ENCODE measurements at regions of chr3 and their contacts with region 1.

Region 1: GRCh38 chr3:36937492-36937891 is 7.4 kb downstream of the TRANK1 start:
- DNase-seq: no peak
- ATAC-seq: no peak
- H3K4me3 ChIP-seq: no peak overlapping the region
- H3K4me3 Mint-ChIP-seq: no peak overlapping the region
- H3K27ac ChIP-seq: no peak overlapping the region
- H3K27ac Mint-ChIP-seq: no peak overlapping the region
- H3K4me1 ChIP-seq: no peaks in the 10 kb centered on the region
- H3K4me1 Mint-ChIP-seq: peaks cover 13 to 16% (median 16%) of the 10 kb centered on the region in 3 donors
- H3K27me3 ChIP-seq: no peaks in the 10 kb centered on the region
- H3K27me3 Mint-ChIP-seq: no peaks in the 10 kb centered on the region

Region 2: DNA sequence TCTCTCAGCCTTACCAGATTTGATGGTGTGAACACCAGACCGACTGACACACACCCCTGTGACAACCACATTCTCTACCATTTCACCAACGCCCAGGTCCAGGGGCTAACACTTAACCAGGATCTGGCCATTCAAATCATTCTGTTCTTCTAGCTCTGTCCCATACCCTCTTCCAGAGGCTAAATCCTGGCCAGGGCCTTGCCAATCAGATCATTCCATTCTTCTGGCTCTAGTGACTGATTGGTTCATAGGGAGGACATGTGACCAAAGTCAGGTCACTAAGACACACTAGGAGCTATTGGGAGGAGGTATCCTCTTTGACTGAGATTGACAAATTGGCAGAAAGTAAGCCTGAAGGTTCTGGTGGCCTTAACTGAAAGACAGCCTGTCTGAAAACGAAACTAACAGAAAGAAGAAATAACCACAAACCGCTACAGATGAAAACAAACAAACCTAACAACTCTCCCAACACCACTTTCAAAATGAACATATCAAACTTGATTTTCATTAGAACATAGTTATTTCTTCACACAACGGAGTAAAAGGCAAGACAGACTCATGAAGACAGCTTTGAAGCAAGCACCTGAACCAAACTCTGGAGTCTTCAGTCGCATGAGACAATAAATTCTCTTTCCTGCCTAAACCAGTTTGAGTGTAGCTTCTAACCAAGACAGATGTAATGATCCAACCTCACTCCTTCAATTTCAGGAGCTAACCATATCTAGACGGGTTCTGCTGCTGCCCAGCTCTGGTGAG is 61.1 kb before region 1 on chr3:
- CTCF ChIA-PET with region 1: interaction called in 1 of 2 experiments, 3 read pairs
- POLR2A ChIA-PET with region 1: interaction called in 1 of 2 experiments, 14 read pairs
- DNase-seq: peak in 25 of 35 experiments; percentile 4 to 78 (median 17)
- ATAC-seq: peak; percentile 86 to 92 (median 91)
- H3K4me3 ChIP-seq: peak overlapping the region; percentile 18 to 23
- H3K4me3 Mint-ChIP-seq: peak overlapping the region; percentile 61 to 76 (median 66)
- H3K27ac ChIP-seq: peak overlapping the region; percentile 89
- H3K27ac Mint-ChIP-seq: peak overlapping the region; percentile 94 to 99
- H3K4me1 ChIP-seq: peaks cover 23 to 30% of the 10 kb centered on the region in 2 experiments
- H3K4me1 Mint-ChIP-seq: peaks cover 55 to 65% (median 57%) of the 10 kb centered on the region in 3 donors
- H3K27me3 ChIP-seq: no peaks in the 10 kb centered on the region
- H3K27me3 Mint-ChIP-seq: no peaks in the 10 kb centered on the region

Region 3: DNA sequence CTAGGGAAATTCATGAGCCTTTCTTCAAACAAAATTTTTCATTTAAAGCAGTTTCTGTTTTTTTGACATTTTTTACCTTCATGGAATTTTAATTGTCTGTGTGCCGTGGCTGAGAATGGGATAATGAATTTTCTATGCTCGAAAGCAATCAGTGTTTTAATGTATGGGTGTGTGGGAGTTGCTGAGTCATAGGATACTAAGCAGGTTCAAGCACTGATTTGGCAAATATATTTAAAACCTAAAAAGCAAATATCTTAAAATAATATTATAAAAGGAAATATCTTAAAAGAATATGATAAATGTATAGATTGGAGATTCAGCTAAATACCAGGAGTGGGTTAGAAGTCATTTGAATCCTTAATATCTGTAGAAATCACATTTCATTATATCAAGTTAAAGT is 410.4 kb after region 1 on chr3:
- CTCF ChIA-PET with region 1: no interaction called
- POLR2A ChIA-PET with region 1: no interaction called
- DNase-seq: no peak
- ATAC-seq: no peak
- H3K4me3 ChIP-seq: no peak overlapping the region
- H3K4me3 Mint-ChIP-seq: no peak overlapping the region
- H3K27ac ChIP-seq: no peak overlapping the region
- H3K27ac Mint-ChIP-seq: no peak overlapping the region
- H3K4me1 ChIP-seq: no peaks in the 10 kb centered on the region
- H3K4me1 Mint-ChIP-seq: no peaks in the 10 kb centered on the region
- H3K27me3 ChIP-seq: no peaks in the 10 kb centered on the region
- H3K27me3 Mint-ChIP-seq: no peaks in the 10 kb centered on the region

Measured in T-cell (primary cell).